Naive thymus-derived CD4-positive, alpha-beta T cell (primary cell): ENCODE measurements at regions of chr12 and their contacts with region 1.

Region 1: GRCh38 chr12:66301944-66302826 is at the start of gene HELB:
- DNase-seq: peak; percentile 73 to 93 (median 84)
- ATAC-seq: peak; percentile 92
- H3K4me3 ChIP-seq: peak within 1 kb of the TSS; percentile 98
- H3K4me3 Mint-ChIP-seq: peak within 1 kb of the TSS; percentile 87 to 99 (median 97)
- H3K27ac ChIP-seq: peak within 1 kb of the TSS; percentile 91
- H3K27ac Mint-ChIP-seq: peak within 1 kb of the TSS; percentile 90 to 99 (median 98)
- H3K4me1 ChIP-seq: peaks cover 17 to 20% of the 10 kb centered on the region in 2 donors
- H3K4me1 Mint-ChIP-seq: peaks cover 25 to 63% (median 54%) of the 10 kb centered on the region in 7 donors
- H3K27me3 ChIP-seq: no peaks in the 10 kb centered on the region
- H3K27me3 Mint-ChIP-seq: peaks cover 0 to 5% (median 0%) of the 10 kb centered on the region in 5 donors
- total RNA-seq, gene HELB: 47.9 to 59.2 (median 54.0) TPM

Region 2: GRCh38 chr12:64403707-64404469 is 1898.3 kb before region 1 on chr12 and contains the start of gene XPOT:
- CTCF ChIA-PET with region 1: no interaction called
- POLR2A ChIA-PET with region 1: no interaction called
- intact Hi-C with region 1: loop called in 1 of 2 experiments (anchors 10 kb)
- DNase-seq: peak; percentile 85 to 94 (median 92)
- ATAC-seq: peak; percentile 97
- H3K4me3 ChIP-seq: peak within 1 kb of the TSS; percentile 81
- H3K4me3 Mint-ChIP-seq: peak within 1 kb of the TSS; percentile 90 to 99 (median 96)
- H3K27ac ChIP-seq: peak within 1 kb of the TSS; percentile 82
- H3K27ac Mint-ChIP-seq: peak within 1 kb of the TSS; percentile 84 to 98 (median 95)
- H3K4me1 ChIP-seq: peaks cover 0 to 8% of the 10 kb centered on the region in 2 donors
- H3K4me1 Mint-ChIP-seq: peaks cover 8 to 41% (median 25%) of the 10 kb centered on the region in 7 donors
- H3K27me3 ChIP-seq: no peaks in the 10 kb centered on the region
- H3K27me3 Mint-ChIP-seq: no peaks in the 10 kb centered on the region
- total RNA-seq, gene XPOT: 46.6 to 118 (median 75.1) TPM

Region 3: GRCh38 chr12:64759035-64759901 is 1542.9 kb before region 1 on chr12 and contains the start of gene GNS:
- CTCF ChIA-PET with region 1: no interaction called
- POLR2A ChIA-PET with region 1: no interaction called
- intact Hi-C with region 1: loop called in 1 of 2 experiments (anchors 1 kb)
- DNase-seq: peak; percentile 81 to 99 (median 86)
- ATAC-seq: peak; percentile 96
- H3K4me3 ChIP-seq: peak within 1 kb of the TSS; percentile 98
- H3K4me3 Mint-ChIP-seq: peak within 1 kb of the TSS; percentile 86 to 99 (median 96)
- H3K27ac ChIP-seq: peak within 1 kb of the TSS; percentile 77
- H3K27ac Mint-ChIP-seq: peak within 1 kb of the TSS; percentile 78 to 96 (median 91)
- H3K4me1 ChIP-seq: peaks cover 0 to 21% of the 10 kb centered on the region in 2 donors
- H3K4me1 Mint-ChIP-seq: peaks cover 17 to 60% (median 48%) of the 10 kb centered on the region in 7 donors
- H3K27me3 ChIP-seq: no peaks in the 10 kb centered on the region
- H3K27me3 Mint-ChIP-seq: peaks cover 0 to 4% (median 0%) of the 10 kb centered on the region in 5 donors
- total RNA-seq, gene GNS: 24.4 to 62.8 (median 35.2) TPM

Region 4: GRCh38 chr12:65958456-65958855 is 343.7 kb before region 1 on chr12:
- CTCF ChIA-PET with region 1: no interaction called
- POLR2A ChIA-PET with region 1: no interaction called
- intact Hi-C with region 1: no loop called
- DNase-seq: no peak
- ATAC-seq: no peak
- H3K4me3 ChIP-seq: no peak overlapping the region
- H3K4me3 Mint-ChIP-seq: no peak overlapping the region
- H3K27ac ChIP-seq: no peak overlapping the region
- H3K27ac Mint-ChIP-seq: no peak overlapping the region
- H3K4me1 ChIP-seq: no peaks in the 10 kb centered on the region
- H3K4me1 Mint-ChIP-seq: peaks cover 0 to 4% (median 0%) of the 10 kb centered on the region in 7 donors
- H3K27me3 ChIP-seq: no peaks in the 10 kb centered on the region
- H3K27me3 Mint-ChIP-seq: peaks cover 14 to 23% (median 16%) of the 10 kb centered on the region in 5 donors

Region 5: GRCh38 chr12:66169221-66170170 is 132.7 kb before region 1 on chr12 and contains the start of gene TMBIM4:
- CTCF ChIA-PET with region 1: no interaction called
- POLR2A ChIA-PET with region 1: interaction called, 14 read pairs
- intact Hi-C with region 1: loop called (anchors 1 kb)
- DNase-seq: peak; percentile 68 to 91 (median 86)
- ATAC-seq: peak; percentile 85
- H3K4me3 ChIP-seq: peak within 1 kb of the TSS; percentile 80
- H3K4me3 Mint-ChIP-seq: peak within 1 kb of the TSS; percentile 89 to 100 (median 95)
- H3K27ac ChIP-seq: peak within 1 kb of the TSS; percentile 97
- H3K27ac Mint-ChIP-seq: peak within 1 kb of the TSS; percentile 94 to 98 (median 97)
- H3K4me1 ChIP-seq: peaks cover 10 to 24% of the 10 kb centered on the region in 2 donors
- H3K4me1 Mint-ChIP-seq: peaks cover 38 to 62% (median 52%) of the 10 kb centered on the region in 7 donors
- H3K27me3 ChIP-seq: no peaks in the 10 kb centered on the region
- H3K27me3 Mint-ChIP-seq: no peaks in the 10 kb centered on the region
- total RNA-seq, gene TMBIM4: 38.6 to 88.0 (median 79.8) TPM

Region 6: GRCh38 chr12:66279123-66279712 is 23.0 kb before region 1 on chr12:
- CTCF ChIA-PET with region 1: interaction called, 8 read pairs
- POLR2A ChIA-PET with region 1: interaction called, 44 read pairs
- intact Hi-C with region 1: loop called (anchors 1 kb)
- DNase-seq: peak in 6 of 9 donors; percentile 33 to 58 (median 52)
- ATAC-seq: peak; percentile 76
- H3K4me3 ChIP-seq: no peak overlapping the region
- H3K4me3 Mint-ChIP-seq: peak overlapping the region in 8 of 10 donors; percentile 2 to 67 (median 20)
- H3K27ac ChIP-seq: no peak overlapping the region
- H3K27ac Mint-ChIP-seq: peak overlapping the region in 4 of 9 donors; percentile 22 to 78 (median 49)
- H3K4me1 ChIP-seq: peaks cover 17 to 38% of the 10 kb centered on the region in 2 donors
- H3K4me1 Mint-ChIP-seq: peaks cover 33 to 70% (median 52%) of the 10 kb centered on the region in 7 donors
- H3K27me3 ChIP-seq: no peaks in the 10 kb centered on the region
- H3K27me3 Mint-ChIP-seq: no peaks in the 10 kb centered on the region

Region 7: DNA sequence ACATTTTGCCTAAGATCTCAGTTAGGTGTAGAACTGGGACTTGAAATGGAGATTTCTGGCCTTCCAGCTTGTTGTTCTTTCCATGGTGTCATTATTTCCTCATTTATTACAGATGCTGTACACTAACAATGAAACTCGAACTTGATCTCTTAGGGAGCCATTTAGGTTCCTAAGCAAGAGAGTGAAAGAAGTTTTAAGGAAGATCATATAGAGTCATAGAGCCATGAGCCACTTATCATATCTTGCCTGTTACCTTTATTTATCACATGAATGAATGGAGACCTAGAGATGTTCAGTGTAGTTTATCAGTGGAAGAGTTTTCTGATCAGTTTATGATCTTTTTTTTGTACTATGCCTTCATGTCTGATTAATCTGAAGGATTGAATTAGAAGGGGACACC is 10.0 kb after region 1 on chr12:
- CTCF ChIA-PET with region 1: no interaction called
- POLR2A ChIA-PET with region 1: no interaction called
- intact Hi-C with region 1: loop called (anchors 1 kb)
- DNase-seq: no peak
- ATAC-seq: no peak
- H3K4me3 ChIP-seq: peak overlapping the region; percentile 15
- H3K4me3 Mint-ChIP-seq: peak overlapping the region; percentile 17 to 82 (median 71)
- H3K27ac ChIP-seq: no peak overlapping the region
- H3K27ac Mint-ChIP-seq: peak overlapping the region in 7 of 9 donors; percentile 7 to 65 (median 37)
- H3K4me1 ChIP-seq: peaks cover 38 to 48% of the 10 kb centered on the region in 2 donors
- H3K4me1 Mint-ChIP-seq: peaks cover 62 to 95% (median 87%) of the 10 kb centered on the region in 7 donors
- H3K27me3 ChIP-seq: no peaks in the 10 kb centered on the region
- H3K27me3 Mint-ChIP-seq: no peaks in the 10 kb centered on the region

Region 8: GRCh38 chr12:66352197-66352596 is 50.0 kb after region 1 on chr12:
- CTCF ChIA-PET with region 1: no interaction called
- POLR2A ChIA-PET with region 1: interaction called, 3 read pairs
- intact Hi-C with region 1: loop called in 1 of 2 experiments (anchors 2 kb)
- DNase-seq: no peak
- ATAC-seq: peak; percentile 34
- H3K4me3 ChIP-seq: no peak overlapping the region
- H3K4me3 Mint-ChIP-seq: no peak overlapping the region
- H3K27ac ChIP-seq: no peak overlapping the region
- H3K27ac Mint-ChIP-seq: peak overlapping the region in 4 of 9 donors; percentile 42 to 75 (median 58)
- H3K4me1 ChIP-seq: no peaks in the 10 kb centered on the region
- H3K4me1 Mint-ChIP-seq: peaks cover 0 to 7% (median 0%) of the 10 kb centered on the region in 7 donors
- H3K27me3 ChIP-seq: no peaks in the 10 kb centered on the region
- H3K27me3 Mint-ChIP-seq: no peaks in the 10 kb centered on the region